ENCODE measurements at regions of chr22 and their contacts with region 1.

Region 1: DNA sequence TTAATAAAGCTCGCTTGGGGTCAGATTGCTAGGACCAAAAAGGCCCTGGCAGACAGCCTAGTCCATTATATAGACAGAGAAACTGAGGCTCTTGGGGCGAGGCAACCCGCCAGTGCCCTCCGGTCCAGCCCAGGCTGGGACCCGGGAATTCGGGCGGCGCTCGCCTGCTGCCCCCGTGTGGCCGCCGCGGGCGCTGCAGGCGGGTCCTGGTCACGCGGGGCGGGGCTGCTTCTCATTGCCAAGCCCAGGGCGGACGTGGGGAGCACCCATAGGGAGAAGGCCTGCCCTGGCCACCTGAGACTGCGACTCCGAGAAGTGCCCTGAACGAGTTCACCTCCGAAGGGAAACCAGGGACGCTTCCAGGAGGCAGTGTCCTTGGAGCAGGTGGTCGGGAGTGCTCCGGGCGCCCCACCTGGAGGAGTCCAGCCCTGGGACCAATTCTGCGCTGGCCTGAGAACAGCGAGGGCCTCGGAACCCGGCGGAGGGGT is 36.0 kb upstream of the CSNK1E start:
- H3K4me3 Mint-ChIP-seq: no peak overlapping the region
- H3K27ac Mint-ChIP-seq: no peak overlapping the region
- H3K4me1 Mint-ChIP-seq: peaks cover 5% of the 10 kb centered on the region
- H3K27me3 Mint-ChIP-seq: peaks cover 37% of the 10 kb centered on the region

Region 2: GRCh38 chr22:38051900-38052862 is 301.0 kb before region 1 on chr22:
- intact Hi-C with region 1: loop called (anchors 5 kb)
- H3K4me3 Mint-ChIP-seq: no peak overlapping the region
- H3K27ac Mint-ChIP-seq: no peak overlapping the region
- H3K4me1 Mint-ChIP-seq: peaks cover 18% of the 10 kb centered on the region
- H3K27me3 Mint-ChIP-seq: peaks cover 62% of the 10 kb centered on the region

Region 3: DNA sequence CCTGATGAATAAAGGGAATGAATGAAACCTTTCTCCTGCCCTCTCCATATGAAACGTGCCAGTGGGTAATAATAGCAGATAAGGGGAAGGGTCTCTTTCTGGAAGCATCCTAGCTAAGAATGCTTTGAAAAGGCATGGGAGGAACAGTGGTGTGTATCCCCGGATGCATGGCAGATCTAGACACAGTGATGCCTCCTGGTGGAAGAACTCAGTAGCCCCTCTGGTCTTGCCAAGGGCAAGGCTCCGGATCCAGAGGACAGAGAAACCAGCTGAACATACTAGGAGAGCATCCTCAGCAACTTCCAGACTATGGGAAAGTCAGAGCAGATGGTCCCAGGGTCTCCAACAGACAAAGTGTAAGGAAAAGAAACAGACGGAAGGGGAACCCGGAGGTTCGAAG is 249.1 kb before region 1 on chr22:
- intact Hi-C with region 1: loop called (anchors 10 kb)
- H3K4me3 Mint-ChIP-seq: no peak overlapping the region
- H3K27ac Mint-ChIP-seq: no peak overlapping the region
- H3K4me1 Mint-ChIP-seq: no peaks in the 10 kb centered on the region
- H3K27me3 Mint-ChIP-seq: peaks cover 33% of the 10 kb centered on the region

Region 4: DNA sequence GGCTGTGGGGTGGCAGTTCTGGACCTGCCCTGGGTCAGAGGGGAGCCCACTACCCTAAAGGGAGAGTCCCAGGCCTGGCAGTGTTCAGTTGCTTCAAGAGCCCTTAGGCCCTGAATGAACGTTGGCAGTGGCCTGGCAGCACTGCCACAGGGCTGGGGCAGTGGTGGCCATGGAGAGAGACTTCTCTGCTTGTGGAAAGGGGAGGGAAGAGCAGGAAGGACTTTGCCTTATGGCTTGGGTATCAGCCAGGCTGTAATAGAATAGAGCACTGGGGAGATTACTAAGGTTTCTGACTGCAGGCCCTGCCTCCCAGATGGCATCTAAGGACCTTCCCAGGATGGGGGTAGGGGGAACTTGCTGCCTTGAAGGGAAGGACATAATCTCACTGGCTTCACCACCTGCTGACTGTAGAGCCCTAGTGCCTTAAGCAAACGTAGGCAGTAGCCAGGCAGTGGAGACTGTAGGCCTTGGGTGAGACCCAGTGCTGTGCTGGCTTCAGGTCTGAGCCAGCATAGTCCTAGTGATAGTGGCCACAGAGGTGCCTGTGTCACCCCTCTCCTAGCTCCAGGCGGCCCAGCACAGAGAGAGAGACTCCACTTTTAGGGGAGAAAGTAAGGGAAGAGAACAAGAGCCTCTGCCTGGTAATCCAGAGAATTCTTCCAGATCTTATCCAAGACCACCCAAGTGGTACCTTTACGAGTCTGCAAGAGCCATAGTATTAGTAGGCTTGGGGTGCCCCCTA is 199.2 kb before region 1 on chr22:
- intact Hi-C with region 1: no loop called
- H3K4me3 Mint-ChIP-seq: no peak overlapping the region
- H3K27ac Mint-ChIP-seq: no peak overlapping the region
- H3K4me1 Mint-ChIP-seq: peaks cover 2% of the 10 kb centered on the region
- H3K27me3 Mint-ChIP-seq: peaks cover 84% of the 10 kb centered on the region

Region 5: GRCh38 chr22:38262051-38262795 is 91.0 kb before region 1 on chr22:
- intact Hi-C with region 1: loop called (anchors 2 kb)
- H3K4me3 Mint-ChIP-seq: no peak overlapping the region
- H3K27ac Mint-ChIP-seq: no peak overlapping the region
- H3K4me1 Mint-ChIP-seq: peaks cover 57% of the 10 kb centered on the region
- H3K27me3 Mint-ChIP-seq: peaks cover 7% of the 10 kb centered on the region

Region 6: DNA sequence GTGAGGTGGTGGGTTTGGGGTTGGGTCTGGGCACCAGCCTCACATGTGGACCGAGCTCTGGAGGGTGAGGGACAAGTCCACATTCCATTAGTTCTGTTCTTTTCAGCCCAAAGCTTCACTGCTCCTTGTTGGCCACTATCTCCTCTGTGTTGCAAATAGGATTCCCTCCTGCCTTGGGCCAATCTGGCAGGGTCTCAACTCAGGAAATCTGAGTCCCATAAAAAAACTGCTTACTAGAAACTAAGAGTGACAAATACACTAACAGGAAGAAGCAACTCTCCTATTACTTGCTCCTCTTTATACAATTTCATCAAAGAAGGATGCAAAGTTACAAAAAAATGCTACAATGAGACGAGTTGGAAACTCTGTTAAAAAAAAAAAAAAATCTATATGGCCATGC is 30.2 kb after region 1 on chr22:
- intact Hi-C with region 1: no loop called
- H3K4me3 Mint-ChIP-seq: no peak overlapping the region
- H3K27ac Mint-ChIP-seq: no peak overlapping the region
- H3K4me1 Mint-ChIP-seq: peaks cover 6% of the 10 kb centered on the region
- H3K27me3 Mint-ChIP-seq: no peaks in the 10 kb centered on the region

Region 7: GRCh38 chr22:38412435-38413084 is 59.4 kb after region 1 on chr22:
- intact Hi-C with region 1: no loop called
- H3K4me3 Mint-ChIP-seq: peak overlapping the region; percentile 53
- H3K27ac Mint-ChIP-seq: no peak overlapping the region
- H3K4me1 Mint-ChIP-seq: peaks cover 32% of the 10 kb centered on the region
- H3K27me3 Mint-ChIP-seq: peaks cover 43% of the 10 kb centered on the region